Sigmoid colon (tissue), 7 donors: ENCODE measurements at regions of chr5 and their contacts with region 1.

Region 1: DNA sequence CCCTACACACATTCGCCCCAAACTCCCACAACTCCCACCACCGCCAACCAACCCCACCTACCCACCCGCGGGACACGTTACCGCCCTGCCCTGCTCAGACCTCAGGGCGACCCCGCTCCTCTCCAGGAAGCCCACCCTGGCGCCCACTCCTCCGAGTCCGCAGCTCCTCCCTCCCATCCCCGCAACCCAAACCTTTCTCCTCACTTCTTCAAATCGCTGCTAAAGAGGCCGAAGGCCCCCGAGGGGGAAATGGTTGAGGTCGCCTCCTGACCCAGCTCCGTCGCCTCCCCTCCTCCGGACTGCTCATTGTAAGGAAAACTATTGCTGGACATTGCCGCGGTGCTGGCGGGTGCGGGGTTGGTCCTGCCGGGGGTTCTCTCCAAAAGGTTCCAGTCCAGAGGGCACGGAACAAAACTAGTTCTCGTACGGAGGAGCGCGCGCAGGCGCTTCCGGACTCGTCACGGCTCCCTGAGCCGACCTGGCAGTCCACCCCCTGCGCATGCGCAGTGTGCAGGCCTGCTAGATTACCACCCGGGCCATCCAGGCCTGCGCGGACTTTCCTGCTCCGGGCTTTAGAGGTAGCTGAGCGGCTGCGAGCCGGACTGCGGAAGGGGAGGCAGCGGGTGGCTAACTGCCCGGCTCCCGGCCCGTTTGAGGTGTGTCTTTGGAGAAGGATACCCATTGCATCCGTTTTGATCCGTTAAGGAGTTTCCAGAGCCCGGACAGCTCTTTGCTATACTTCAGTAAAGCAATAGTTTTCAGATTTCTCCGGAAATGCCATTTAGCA is at the start of gene AP3B1:
- DNase-seq: peak; percentile 100
- H3K4me3 ChIP-seq: peak within 1 kb of the TSS; percentile 73 to 97 (median 88)
- H3K27ac ChIP-seq: peak within 1 kb of the TSS; percentile 86 to 93 (median 88)
- H3K4me1 ChIP-seq: peaks cover 5 to 27% (median 21%) of the 10 kb centered on the region in 4 donors
- H3K27me3 ChIP-seq: no peaks in the 10 kb centered on the region
- CTCF ChIP-seq: no peak
- EP300 ChIP-seq: peak in 1 of 4 donors; percentile 68
- POLR2A ChIP-seq: peak; percentile 92 to 93
- total RNA-seq, gene AP3B1: 34.6 to 48.2 (median 39.5) TPM

Region 2: DNA sequence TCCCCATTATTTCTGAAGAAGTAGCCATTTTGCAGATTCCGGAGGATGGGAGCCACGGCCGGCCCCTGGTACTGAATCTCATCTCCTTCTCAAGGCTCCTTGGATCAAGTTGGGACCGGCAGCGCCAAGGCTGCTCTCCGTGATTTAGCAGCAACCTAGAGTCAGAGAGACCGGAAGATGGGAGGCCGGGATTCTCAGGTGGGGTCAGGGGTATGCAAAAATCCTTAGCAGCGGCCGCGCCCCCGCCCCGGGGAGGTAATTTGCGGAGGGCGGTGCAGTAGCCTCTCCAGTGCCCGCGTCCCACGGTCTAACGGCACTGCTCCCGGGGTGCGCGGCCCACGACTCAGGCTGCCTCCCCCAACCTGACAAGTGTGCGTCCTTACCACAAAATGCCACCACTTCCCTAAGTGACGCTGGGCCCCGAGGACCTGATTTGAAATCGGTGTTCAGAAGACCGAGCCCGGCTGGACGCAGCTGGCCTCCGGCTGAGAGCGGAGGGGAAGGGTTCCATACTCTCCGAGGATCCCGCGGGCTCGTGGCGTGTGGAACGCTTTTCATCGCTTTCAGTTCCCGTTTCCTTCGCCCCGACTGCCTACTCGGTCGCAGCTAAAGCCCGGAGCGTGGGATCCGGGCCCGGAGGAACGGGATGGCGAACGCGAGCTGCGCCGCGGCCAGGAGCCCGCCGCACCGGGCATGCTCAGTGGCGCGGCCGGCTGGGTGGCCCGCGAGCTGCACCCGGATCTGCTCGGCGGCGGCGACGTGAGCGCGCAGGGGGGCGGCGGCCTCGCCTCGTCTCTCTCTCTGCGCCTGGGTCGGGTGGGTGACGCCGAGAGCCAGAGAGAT is 65.6 kb after region 1 on chr5 and contains the start of gene SCAMP1:
- intact Hi-C with region 1: loop called (anchors 1 kb)
- DNase-seq: peak; percentile 95
- H3K4me3 ChIP-seq: peak within 1 kb of the TSS; percentile 83 to 97 (median 88)
- H3K27ac ChIP-seq: peak within 1 kb of the TSS; percentile 87 to 95 (median 92)
- H3K4me1 ChIP-seq: peaks cover 3 to 26% (median 12%) of the 10 kb centered on the region in 4 donors
- H3K27me3 ChIP-seq: no peaks in the 10 kb centered on the region
- CTCF ChIP-seq: peak in 2 of 4 experiments; percentile 12 to 52
- EP300 ChIP-seq: peak in 1 of 4 donors; percentile 24
- POLR2A ChIP-seq: no peak
- total RNA-seq, gene SCAMP1: 31.0 to 45.3 (median 37.7) TPM

Region 3: DNA sequence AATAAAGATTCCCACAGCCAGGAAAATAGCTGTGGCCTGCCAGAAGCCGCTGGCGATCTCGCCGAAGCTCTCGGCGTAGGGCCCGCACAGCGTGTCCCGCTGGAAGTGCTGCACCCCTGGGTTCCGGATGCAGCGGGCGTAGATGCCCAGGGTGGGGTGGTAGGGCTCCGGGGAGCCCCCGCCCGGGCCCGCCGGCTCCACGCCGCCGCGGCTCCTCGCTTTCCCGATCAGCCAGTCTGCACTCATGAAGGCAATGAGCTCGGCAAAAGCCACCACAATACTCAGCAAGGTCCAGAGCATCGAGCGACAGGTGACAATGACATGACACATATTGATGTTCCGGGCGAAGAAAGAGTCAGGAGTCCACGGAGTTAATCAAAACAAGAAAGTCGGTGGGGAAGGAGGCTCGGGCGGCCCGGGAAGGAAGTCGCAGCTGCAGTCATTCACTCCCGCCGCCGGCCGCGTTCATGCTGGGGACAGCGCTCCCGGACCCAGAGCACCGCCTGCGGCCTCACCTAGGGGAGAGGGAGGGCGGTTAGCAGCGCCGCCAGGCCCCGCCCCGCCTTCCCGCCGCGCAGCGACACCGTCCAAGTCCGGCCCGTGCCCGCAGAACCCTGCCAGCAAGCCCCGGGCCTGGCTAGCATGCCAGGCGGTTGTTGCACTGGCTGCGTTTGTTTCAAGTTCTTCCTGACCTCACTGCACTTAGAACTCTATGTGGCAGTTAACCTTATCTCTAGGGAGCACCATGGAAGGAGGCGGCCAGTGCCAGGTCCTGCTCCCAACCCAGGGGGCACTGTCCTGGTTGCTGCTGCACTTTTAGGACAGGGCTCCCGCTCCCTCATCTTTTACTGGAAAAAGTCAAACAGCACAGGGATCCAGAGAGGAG is 215.7 kb after region 1 on chr5:
- intact Hi-C with region 1: loop called (anchors 10 kb)
- DNase-seq: peak; percentile 88
- H3K4me3 ChIP-seq: peak overlapping the region; percentile 22 to 51 (median 46)
- H3K27ac ChIP-seq: peak overlapping the region; percentile 78 to 84 (median 82)
- H3K4me1 ChIP-seq: peaks cover 0 to 69% (median 59%) of the 10 kb centered on the region in 4 donors
- H3K27me3 ChIP-seq: no peaks in the 10 kb centered on the region
- CTCF ChIP-seq: peak in 1 of 4 experiments; percentile 5
- EP300 ChIP-seq: no peak
- POLR2A ChIP-seq: peak in 1 of 2 donors; percentile 12

Region 4: GRCh38 chr5:78521455-78521854 is 227.0 kb after region 1 on chr5:
- intact Hi-C with region 1: no loop called
- DNase-seq: no peak
- H3K4me3 ChIP-seq: no peak overlapping the region
- H3K27ac ChIP-seq: no peak overlapping the region
- H3K4me1 ChIP-seq: peaks cover 0 to 66% (median 37%) of the 10 kb centered on the region in 4 donors
- H3K27me3 ChIP-seq: no peaks in the 10 kb centered on the region
- CTCF ChIP-seq: no peak
- EP300 ChIP-seq: no peak
- POLR2A ChIP-seq: no peak

Region 5: GRCh38 chr5:78984439-78985115 is 690.1 kb after region 1 on chr5:
- intact Hi-C with region 1: loop called (anchors 10 kb)
- DNase-seq: peak; percentile 93
- H3K4me3 ChIP-seq: peak overlapping the region; percentile 71 to 97 (median 78)
- H3K27ac ChIP-seq: peak overlapping the region; percentile 95 to 100 (median 98)
- H3K4me1 ChIP-seq: peaks cover 0 to 26% (median 21%) of the 10 kb centered on the region in 4 donors
- H3K27me3 ChIP-seq: no peaks in the 10 kb centered on the region
- CTCF ChIP-seq: peak; percentile 27 to 56 (median 39)
- EP300 ChIP-seq: no peak
- POLR2A ChIP-seq: peak in 1 of 2 donors; percentile 22